Activated CD4-positive, alpha-beta T cell treated with anti-CD3 and anti-CD28 coated beads, Interleukin-2, amount 10 ng/mL, durations not matched to agents 24 days and 14 days (primary cell): ENCODE measurements at regions of chr2 and their contacts with region 1.

Region 1: DNA sequence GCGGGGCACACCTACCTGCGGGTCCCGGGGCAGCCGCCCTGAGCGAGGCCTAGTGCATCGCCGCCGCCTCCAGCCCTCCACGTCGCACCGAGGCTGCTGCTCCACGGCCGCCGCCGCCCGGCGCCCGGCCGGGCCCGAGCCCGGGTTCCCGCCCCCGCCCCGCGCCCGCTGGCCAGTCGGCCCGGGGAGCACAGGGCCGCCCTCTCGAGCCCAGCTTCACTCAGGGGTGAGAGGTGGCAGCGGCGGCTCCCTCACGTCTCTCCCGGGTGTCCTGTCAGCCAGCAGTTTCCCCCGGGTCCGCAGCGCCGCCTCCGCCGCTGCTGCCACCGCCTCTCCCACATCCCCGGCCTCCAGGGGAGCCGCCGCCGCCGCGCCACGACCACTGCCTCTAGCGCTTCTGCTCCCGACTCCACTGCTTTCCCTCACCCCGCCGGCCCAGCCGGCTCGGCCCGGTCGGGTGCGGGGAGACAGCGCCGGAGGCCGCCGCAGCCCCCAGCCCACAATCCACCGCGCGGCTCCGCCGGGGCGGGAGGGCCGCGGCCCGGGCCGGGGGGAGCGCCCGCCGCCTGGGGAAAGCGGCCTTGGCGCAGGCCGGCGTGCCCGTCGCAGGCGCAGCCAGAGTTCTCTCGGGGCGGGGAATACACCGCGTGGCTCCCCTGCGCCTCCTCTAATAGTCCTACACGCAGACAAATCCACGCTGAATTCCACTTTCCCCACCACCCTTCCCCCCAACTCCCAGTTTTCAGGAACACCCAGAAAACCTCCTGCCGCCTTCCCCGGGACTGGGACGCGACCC is at the start of gene VPS54:
- DNase-seq: peak; percentile 89
- H3K4me3 Mint-ChIP-seq: peak within 1 kb of the TSS; percentile 99
- H3K27ac Mint-ChIP-seq: peak within 1 kb of the TSS; percentile 99
- H3K4me1 Mint-ChIP-seq: peaks cover 38% of the 10 kb centered on the region
- H3K27me3 Mint-ChIP-seq: no peaks in the 10 kb centered on the region
- total RNA-seq, gene VPS54: 14.3 and 15.6 TPM in 2 replicates

Region 2: GRCh38 chr2:63888490-63889402 is 130.4 kb before region 1 on chr2:
- intact Hi-C with region 1: loop called (anchors 10 kb)
- DNase-seq: peak; percentile 82
- H3K4me3 Mint-ChIP-seq: no peak overlapping the region
- H3K27ac Mint-ChIP-seq: peak overlapping the region; percentile 31
- H3K4me1 Mint-ChIP-seq: peaks cover 7% of the 10 kb centered on the region
- H3K27me3 Mint-ChIP-seq: no peaks in the 10 kb centered on the region

Region 3: GRCh38 chr2:63977904-63978303 is 41.2 kb before region 1 on chr2:
- intact Hi-C with region 1: loop called (anchors 5 kb)
- DNase-seq: peak; percentile 80
- H3K4me3 Mint-ChIP-seq: peak overlapping the region; percentile 26
- H3K27ac Mint-ChIP-seq: peak overlapping the region; percentile 74
- H3K4me1 Mint-ChIP-seq: peaks cover 23% of the 10 kb centered on the region
- H3K27me3 Mint-ChIP-seq: no peaks in the 10 kb centered on the region